Activated CD8-positive, alpha-beta T cell treated with anti-CD3 and anti-CD28 coated beads, Interleukin-2, amount 10 ng/mL, durations not matched to agents 7 days and 5 days (primary cell): ENCODE measurements at regions of chr12 and their contacts with region 1.

Region 1: GRCh38 chr12:57782608-57783465 is at the start of gene TSFM:
- DNase-seq: peak; percentile 98
- ATAC-seq: peak; percentile 87
- H3K4me3 Mint-ChIP-seq: peak within 1 kb of the TSS; percentile 99
- H3K27ac Mint-ChIP-seq: peak within 1 kb of the TSS; percentile 96
- H3K4me1 Mint-ChIP-seq: peaks cover 40% of the 10 kb centered on the region
- H3K27me3 Mint-ChIP-seq: no peaks in the 10 kb centered on the region
- total RNA-seq, gene TSFM: 35.0 to 35.8 TPM

Region 2: GRCh38 chr12:57754411-57755193 is 28.2 kb before region 1 on chr12 and contains the start of gene MARCHF9:
- CTCF ChIA-PET with region 1: interaction called, 13 read pairs
- POLR2A ChIA-PET with region 1: interaction called, 3 read pairs
- DNase-seq: peak; percentile 90
- ATAC-seq: peak; percentile 46
- H3K4me3 Mint-ChIP-seq: peak within 1 kb of the TSS; percentile 80
- H3K27ac Mint-ChIP-seq: peak within 1 kb of the TSS; percentile 81
- H3K4me1 Mint-ChIP-seq: peaks cover 54% of the 10 kb centered on the region
- H3K27me3 Mint-ChIP-seq: no peaks in the 10 kb centered on the region
- total RNA-seq, gene MARCHF9: 23.6 to 24.4 TPM

Region 3: DNA sequence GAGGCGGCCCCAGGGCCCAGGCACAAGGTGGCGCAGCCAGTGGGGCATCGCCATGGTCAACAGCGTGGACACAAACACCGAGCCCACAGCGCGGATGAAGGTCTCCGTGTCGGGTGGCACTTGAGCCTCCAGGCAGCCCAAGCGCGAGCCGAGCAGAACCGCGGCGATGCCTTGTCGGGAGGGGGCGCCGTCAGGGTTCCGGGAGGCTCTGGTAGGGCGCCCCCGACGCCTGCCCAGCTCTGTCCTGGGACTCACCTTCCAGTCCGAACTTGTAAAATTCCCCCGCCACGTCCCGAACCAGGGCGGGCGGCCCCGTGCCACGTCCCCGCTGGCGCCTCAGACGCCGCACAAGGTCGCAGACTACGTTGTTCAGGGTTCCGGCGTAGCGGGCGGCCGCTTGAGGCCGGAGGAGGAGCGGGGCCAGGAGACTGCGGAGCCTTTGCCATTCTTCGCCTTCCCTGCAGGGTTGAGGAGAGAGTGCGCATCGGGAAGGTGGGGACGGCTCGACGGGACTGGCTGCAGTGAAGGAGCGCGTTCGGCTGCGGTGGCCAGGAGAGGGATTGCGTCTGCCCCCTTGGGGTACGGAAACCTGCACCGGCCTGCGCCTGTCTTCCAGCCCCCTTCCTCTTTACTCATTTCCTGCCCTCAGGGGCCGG is 17.7 kb before region 1 on chr12:
- CTCF ChIA-PET with region 1: interaction called, 14 read pairs
- POLR2A ChIA-PET with region 1: interaction called, 3 read pairs
- DNase-seq: peak; percentile 67
- ATAC-seq: peak; percentile 84
- H3K4me3 Mint-ChIP-seq: peak overlapping the region; percentile 83
- H3K27ac Mint-ChIP-seq: peak overlapping the region; percentile 80
- H3K4me1 Mint-ChIP-seq: peaks cover 28% of the 10 kb centered on the region
- H3K27me3 Mint-ChIP-seq: peaks cover 12% of the 10 kb centered on the region

Region 4: GRCh38 chr12:57771708-57772428 is 11.0 kb before region 1 on chr12 and contains the start of gene METTL1:
- CTCF ChIA-PET with region 1: interaction called, 14 read pairs
- POLR2A ChIA-PET with region 1: interaction called, 5 read pairs
- DNase-seq: peak; percentile 96
- ATAC-seq: peak; percentile 91
- H3K4me3 Mint-ChIP-seq: peak within 1 kb of the TSS; percentile 97
- H3K27ac Mint-ChIP-seq: peak within 1 kb of the TSS; percentile 98
- H3K4me1 Mint-ChIP-seq: peaks cover 22% of the 10 kb centered on the region
- H3K27me3 Mint-ChIP-seq: no peaks in the 10 kb centered on the region
- total RNA-seq, gene METTL1: 26.3 to 28.8 TPM

Region 5: GRCh38 chr12:57793920-57794319 is 11.1 kb after region 1 on chr12:
- CTCF ChIA-PET with region 1: interaction called, 26 read pairs
- POLR2A ChIA-PET with region 1: interaction called, 5 read pairs
- DNase-seq: no peak
- ATAC-seq: no peak
- H3K4me3 Mint-ChIP-seq: no peak overlapping the region
- H3K27ac Mint-ChIP-seq: no peak overlapping the region
- H3K4me1 Mint-ChIP-seq: peaks cover 4% of the 10 kb centered on the region
- H3K27me3 Mint-ChIP-seq: no peaks in the 10 kb centered on the region

Region 6: GRCh38 chr12:57803319-57803893 is 20.6 kb after region 1 on chr12:
- CTCF ChIA-PET with region 1: interaction called, 26 read pairs
- POLR2A ChIA-PET with region 1: interaction called, 5 read pairs
- DNase-seq: peak; percentile 49
- ATAC-seq: no peak
- H3K4me3 Mint-ChIP-seq: no peak overlapping the region
- H3K27ac Mint-ChIP-seq: no peak overlapping the region
- H3K4me1 Mint-ChIP-seq: no peaks in the 10 kb centered on the region
- H3K27me3 Mint-ChIP-seq: no peaks in the 10 kb centered on the region